Panc1 (cell line): ENCODE measurements at regions of chr5 and their contacts with region 1.

Region 1: DNA sequence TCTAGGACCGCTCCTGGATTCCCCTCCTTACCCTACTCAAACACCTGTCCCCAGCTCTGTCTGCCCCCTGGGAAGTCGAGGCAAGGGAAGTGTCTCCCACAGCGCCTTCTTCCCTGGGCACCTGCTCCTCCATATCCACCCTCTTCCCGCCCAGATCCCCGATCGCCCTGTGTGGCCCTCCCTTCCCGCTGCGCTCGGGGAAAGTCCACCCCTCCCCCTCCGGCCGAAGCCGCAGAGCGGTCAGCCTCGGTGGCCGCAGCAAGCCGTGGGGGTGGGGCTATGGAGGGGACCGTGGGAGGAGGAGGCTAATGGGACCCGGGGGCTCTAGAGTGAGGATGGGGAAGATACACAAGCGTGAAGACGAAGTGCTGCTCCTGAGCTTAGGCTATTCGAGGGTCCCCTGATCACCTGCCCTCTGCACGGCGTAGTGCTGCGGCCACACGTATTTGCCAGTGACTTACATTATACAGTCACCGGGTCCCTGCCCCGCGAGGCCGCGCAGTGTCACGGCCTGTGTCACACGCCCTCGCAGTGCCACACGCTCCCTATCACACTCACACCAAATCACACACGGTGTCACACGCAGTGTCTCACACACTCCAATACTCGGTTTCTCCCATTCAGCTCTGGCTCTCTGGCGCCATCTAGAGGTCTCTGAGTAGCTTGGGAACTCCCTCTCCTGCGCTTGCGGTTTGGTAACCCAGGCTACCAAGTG is 658 bp upstream of the PCDH1 start:
- DNase-seq: peak; percentile 86
- ATAC-seq: peak; percentile 84
- H3K4me3 ChIP-seq: peak overlapping the region; percentile 43 to 75
- H3K27ac ChIP-seq: no peak overlapping the region
- H3K4me1 ChIP-seq: peaks cover 14% of the 10 kb centered on the region
- H3K27me3 ChIP-seq: peaks cover 11% of the 10 kb centered on the region
- CTCF ChIP-seq: peak; percentile 97

Region 2: DNA sequence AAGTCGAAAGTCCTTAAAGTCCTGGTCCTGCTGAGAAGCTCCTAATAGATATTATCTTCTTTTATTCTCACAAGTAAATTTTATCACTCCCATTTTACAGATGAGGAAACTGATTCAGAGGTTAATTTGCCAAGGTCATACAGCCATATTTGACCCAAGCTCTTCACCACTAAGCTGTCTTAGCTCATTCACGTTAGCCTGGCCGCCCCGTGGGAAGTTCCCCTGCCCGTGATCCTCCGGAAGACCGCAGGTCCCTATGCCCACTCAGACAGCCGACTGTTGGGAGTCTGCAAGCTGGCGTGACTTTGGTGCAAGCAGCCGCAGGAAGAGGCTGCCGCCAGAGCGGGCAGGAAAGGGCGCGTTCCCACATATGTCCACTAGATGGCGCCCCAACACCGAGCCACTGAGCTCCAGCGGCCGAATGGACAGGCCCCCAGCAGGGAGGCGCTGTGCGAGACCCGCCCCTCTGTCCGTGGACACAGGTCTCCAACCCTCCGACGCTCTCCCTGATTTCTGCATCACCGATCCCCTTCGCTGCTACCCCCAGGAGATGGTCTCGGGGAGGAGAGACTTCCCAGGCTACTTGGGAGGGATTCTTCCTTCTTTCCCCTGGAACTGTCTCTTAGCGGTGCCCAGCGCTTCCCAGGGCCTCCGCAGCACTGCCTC is 186.9 kb before region 1 on chr5:
- CTCF ChIA-PET with region 1: interaction called, 10 read pairs
- POLR2A ChIA-PET with region 1: no interaction called
- in situ Hi-C with region 1: no loop called
- intact Hi-C with region 1: loop called (anchors 2 kb)
- DNase-seq: peak; percentile 50
- ATAC-seq: peak; percentile 93
- H3K4me3 ChIP-seq: peak overlapping the region; percentile 30 to 67
- H3K27ac ChIP-seq: no peak overlapping the region
- H3K4me1 ChIP-seq: no peaks in the 10 kb centered on the region
- H3K27me3 ChIP-seq: peaks cover 3% of the 10 kb centered on the region
- CTCF ChIP-seq: peak; percentile 98

Region 3: DNA sequence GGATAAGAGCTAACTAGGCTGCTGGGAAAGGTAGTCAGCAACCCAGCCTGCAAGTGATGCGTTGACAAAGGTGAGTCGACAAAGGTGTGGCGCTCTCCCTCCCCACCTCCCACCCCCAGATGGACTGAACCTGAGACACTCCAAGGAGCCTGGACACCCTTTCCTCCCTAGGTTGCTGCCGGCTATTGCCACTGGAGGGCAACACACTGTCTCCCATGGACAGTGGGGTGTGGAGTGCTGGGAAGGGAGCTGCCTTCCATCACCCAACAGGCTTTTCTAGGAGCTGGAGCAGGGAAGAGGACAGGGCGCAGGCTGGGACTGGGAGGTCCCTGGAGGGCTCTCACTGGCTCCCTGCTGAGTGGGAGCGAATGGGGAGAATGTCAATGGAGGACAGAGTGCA is 121.5 kb before region 1 on chr5:
- CTCF ChIA-PET with region 1: interaction called, 11 read pairs
- POLR2A ChIA-PET with region 1: no interaction called
- in situ Hi-C with region 1: no loop called
- intact Hi-C with region 1: no loop called
- DNase-seq: no peak
- ATAC-seq: peak; percentile 81
- H3K4me3 ChIP-seq: no peak overlapping the region
- H3K27ac ChIP-seq: no peak overlapping the region
- H3K4me1 ChIP-seq: no peaks in the 10 kb centered on the region; the same call in 1 of the 2 replicates
- H3K27me3 ChIP-seq: peaks cover 2% of the 10 kb centered on the region; the same call in 1 of the 2 replicates
- CTCF ChIP-seq: peak; percentile 58; the same call in 1 of the 2 replicates

Region 4: GRCh38 chr5:142313680-142314079 is 434.8 kb after region 1 on chr5:
- CTCF ChIA-PET with region 1: no interaction called
- POLR2A ChIA-PET with region 1: no interaction called
- in situ Hi-C with region 1: no loop called
- intact Hi-C with region 1: no loop called
- DNase-seq: no peak
- ATAC-seq: no peak
- H3K4me3 ChIP-seq: no peak overlapping the region
- H3K27ac ChIP-seq: no peak overlapping the region
- H3K4me1 ChIP-seq: peaks cover 40% of the 10 kb centered on the region
- H3K27me3 ChIP-seq: no peaks in the 10 kb centered on the region
- CTCF ChIP-seq: no peak